ENCODE measurements at regions of chr12 and their contacts with region 1.

Region 1: GRCh38 chr12:54191550-54192022 is 2.8 kb upstream of the SMUG1 start:
- DNase-seq: peak; percentile 87
- ATAC-seq: peak; percentile 81
- H3K4me3 Mint-ChIP-seq: no peak overlapping the region
- H3K27ac Mint-ChIP-seq: no peak overlapping the region
- H3K4me1 Mint-ChIP-seq: peaks cover 18% of the 10 kb centered on the region
- H3K27me3 Mint-ChIP-seq: peaks cover 73% of the 10 kb centered on the region
- CTCF ChIP-seq: peak; percentile 84

Region 2: DNA sequence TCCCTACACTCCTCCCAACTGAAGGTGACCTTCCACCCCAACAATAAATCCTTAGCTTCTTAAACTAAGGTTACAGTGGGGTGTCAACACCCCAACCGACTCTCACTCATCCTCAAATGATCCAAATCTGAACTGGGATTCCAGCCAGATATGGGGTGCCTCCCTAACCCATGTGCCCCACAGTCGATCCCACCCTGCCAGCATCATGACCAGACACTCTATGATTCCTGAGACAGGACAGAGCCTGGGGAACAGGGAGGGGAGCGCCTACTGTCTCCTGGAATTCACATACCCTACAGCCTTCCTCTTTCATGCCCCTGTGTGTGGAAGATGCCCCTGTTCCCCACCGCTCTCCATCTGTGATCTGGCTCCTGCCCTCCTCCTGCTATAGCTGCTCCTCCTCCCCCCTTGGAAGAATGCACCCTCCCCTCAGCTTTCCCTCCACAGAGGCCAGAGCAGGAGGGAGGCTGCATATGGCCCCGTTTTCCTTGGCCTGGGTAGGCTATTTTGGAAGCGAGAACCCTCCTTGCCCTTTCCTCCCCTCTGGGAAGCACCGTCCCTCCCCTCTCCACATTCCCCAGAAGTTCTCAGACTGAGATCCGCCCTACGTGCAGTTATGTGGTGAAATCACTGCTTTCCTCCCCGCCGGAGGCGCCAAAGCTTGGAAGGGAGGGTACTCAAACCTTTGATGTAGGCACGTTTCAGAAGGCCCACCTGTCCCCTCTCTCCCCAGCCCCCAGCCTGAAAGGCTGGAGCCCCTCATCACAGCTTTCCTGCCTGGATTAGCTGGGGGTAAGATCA is 50.8 kb before region 1 on chr12:
- CTCF ChIA-PET with region 1: interaction called, 12 read pairs
- POLR2A ChIA-PET with region 1: no interaction called
- DNase-seq: no peak
- ATAC-seq: peak; percentile 59
- H3K4me3 Mint-ChIP-seq: no peak overlapping the region; the same call in 1 of the 2 replicates
- H3K27ac Mint-ChIP-seq: no peak overlapping the region
- H3K4me1 Mint-ChIP-seq: peaks cover 14% of the 10 kb centered on the region
- H3K27me3 Mint-ChIP-seq: peaks cover 90% of the 10 kb centered on the region
- CTCF ChIP-seq: no peak

Region 3: DNA sequence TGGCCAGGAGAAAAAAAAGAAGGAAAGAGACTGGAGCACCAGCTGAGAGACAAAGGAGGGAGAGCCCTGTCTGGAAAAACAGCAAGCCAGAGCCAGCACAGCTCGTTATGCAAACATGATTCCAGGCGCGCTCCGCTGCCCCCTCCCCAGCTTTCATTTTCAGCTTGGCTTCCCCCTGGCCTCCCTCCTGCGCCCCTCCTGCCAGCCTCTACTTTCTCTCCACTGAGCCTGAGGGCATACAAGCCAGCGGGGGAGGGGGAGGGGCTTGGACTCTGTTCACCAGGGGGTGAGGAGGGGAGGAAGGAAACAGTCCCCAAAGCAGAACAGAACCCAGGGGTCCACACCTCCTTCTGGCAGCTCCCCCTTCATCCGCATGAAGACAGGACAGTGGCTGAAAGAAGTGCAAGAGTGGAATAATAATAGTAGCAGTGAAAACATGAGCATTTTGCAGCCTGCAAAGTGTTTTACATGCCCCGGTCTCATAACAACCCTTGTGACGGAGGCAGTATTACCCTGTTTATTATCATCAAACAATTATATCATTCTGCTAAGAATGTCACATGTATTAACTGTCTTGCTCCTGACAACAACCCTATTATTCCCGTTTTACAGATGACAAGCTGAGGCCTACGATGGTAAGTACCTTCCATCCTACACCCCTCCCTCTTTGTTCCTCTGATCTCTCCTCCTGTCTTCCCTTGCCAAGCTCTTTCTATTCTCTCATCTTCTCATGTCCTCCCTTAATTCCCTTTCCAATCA is 27.0 kb before region 1 on chr12:
- CTCF ChIA-PET with region 1: interaction called, 18 read pairs
- POLR2A ChIA-PET with region 1: no interaction called
- DNase-seq: peak; percentile 54
- ATAC-seq: peak; percentile 10; the same call in 1 of the 2 replicates
- H3K4me3 Mint-ChIP-seq: peak overlapping the region; percentile 30
- H3K27ac Mint-ChIP-seq: peak overlapping the region; percentile 15; the same call in 1 of the 2 replicates
- H3K4me1 Mint-ChIP-seq: peaks cover 41% of the 10 kb centered on the region
- H3K27me3 Mint-ChIP-seq: peaks cover 12% of the 10 kb centered on the region; the same call in 1 of the 2 replicates
- CTCF ChIP-seq: no peak

Region 4: GRCh38 chr12:54173066-54173726 is 18.4 kb before region 1 on chr12:
- CTCF ChIA-PET with region 1: interaction called, 11 read pairs
- POLR2A ChIA-PET with region 1: interaction called, 3 read pairs
- DNase-seq: peak; percentile 48
- ATAC-seq: peak; percentile 62
- H3K4me3 Mint-ChIP-seq: no peak overlapping the region
- H3K27ac Mint-ChIP-seq: no peak overlapping the region
- H3K4me1 Mint-ChIP-seq: peaks cover 3% of the 10 kb centered on the region; the same call in 1 of the 2 replicates
- H3K27me3 Mint-ChIP-seq: peaks cover 13% of the 10 kb centered on the region
- CTCF ChIP-seq: no peak

Region 5: DNA sequence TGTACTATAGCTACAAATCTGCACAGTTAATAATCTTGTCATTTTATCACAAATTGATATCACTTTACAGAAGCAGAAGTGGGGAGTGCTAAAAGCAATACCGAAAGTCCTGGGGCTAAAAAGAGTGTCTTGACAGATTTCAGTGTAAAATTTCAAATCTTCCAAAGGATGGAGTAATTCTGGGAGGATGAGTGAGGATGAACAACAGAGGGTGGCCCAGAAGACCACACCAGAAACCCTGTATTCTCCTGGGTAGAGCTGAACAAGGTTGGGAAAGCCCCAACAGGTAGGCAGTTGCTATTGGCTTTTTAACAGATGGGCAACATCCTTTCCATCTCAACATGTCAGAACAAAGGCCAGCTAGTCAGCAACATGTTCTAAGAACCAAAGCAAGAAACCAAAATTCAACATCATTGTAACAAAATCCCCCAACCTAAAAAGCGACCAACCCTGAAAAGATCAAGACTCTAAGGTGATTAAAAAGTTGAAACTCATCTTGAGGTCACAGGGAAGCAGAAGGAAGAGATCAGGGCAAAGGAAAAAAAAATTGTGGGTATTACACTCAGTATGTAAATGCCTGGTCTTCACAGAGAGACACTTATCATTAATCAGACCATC is 49.5 kb after region 1 on chr12:
- CTCF ChIA-PET with region 1: no interaction called
- POLR2A ChIA-PET with region 1: no interaction called
- DNase-seq: no peak
- ATAC-seq: no peak
- H3K4me3 Mint-ChIP-seq: no peak overlapping the region
- H3K27ac Mint-ChIP-seq: peak overlapping the region; percentile 64
- H3K4me1 Mint-ChIP-seq: no peaks in the 10 kb centered on the region
- H3K27me3 Mint-ChIP-seq: no peaks in the 10 kb centered on the region
- CTCF ChIP-seq: no peak

Measured in WTC11 (cell line).